ENCODE measurements at regions of chr9 and their contacts with region 1.

Region 1: GRCh38 chr9:110357505-110357904 is 19.8 kb upstream of the TXNDC8 start:
- DNase-seq: no peak
- ATAC-seq: no peak
- H3K4me3 ChIP-seq: no peak overlapping the region
- H3K4me3 Mint-ChIP-seq: no peak overlapping the region
- H3K27ac ChIP-seq: no peak overlapping the region
- H3K27ac Mint-ChIP-seq: no peak overlapping the region
- H3K4me1 ChIP-seq: no peaks in the 10 kb centered on the region
- H3K4me1 Mint-ChIP-seq: no peaks in the 10 kb centered on the region
- H3K27me3 ChIP-seq: no peaks in the 10 kb centered on the region
- H3K27me3 Mint-ChIP-seq: no peaks in the 10 kb centered on the region
- CTCF ChIP-seq: no peak

Region 2: DNA sequence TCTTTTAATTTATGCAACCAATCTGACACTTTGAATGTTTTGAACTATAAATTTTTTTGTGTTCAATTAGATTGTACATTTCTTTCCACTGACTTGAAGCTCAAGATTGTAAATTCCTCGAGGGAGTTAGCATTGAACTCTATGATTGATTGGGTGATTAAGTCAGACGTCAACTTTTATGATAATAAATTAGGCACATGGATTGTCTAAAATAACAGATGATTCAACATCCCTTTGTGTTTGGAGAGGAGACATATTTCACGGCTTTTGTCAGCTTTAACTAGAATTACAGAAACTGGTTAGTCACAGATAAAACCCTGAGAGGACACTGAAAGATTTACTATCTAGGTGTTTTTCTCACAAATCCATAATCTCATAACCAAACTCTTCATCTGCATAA is 12.8 kb after region 1 on chr9:
- CTCF ChIA-PET with region 1: no interaction called
- POLR2A ChIA-PET with region 1: no interaction called
- intact Hi-C with region 1: loop called in 1 of 2 experiments (anchors 1 kb)
- DNase-seq: no peak
- ATAC-seq: no peak
- H3K4me3 ChIP-seq: no peak overlapping the region
- H3K4me3 Mint-ChIP-seq: no peak overlapping the region
- H3K27ac ChIP-seq: no peak overlapping the region
- H3K27ac Mint-ChIP-seq: no peak overlapping the region
- H3K4me1 ChIP-seq: no peaks in the 10 kb centered on the region
- H3K4me1 Mint-ChIP-seq: no peaks in the 10 kb centered on the region
- H3K27me3 ChIP-seq: no peaks in the 10 kb centered on the region
- H3K27me3 Mint-ChIP-seq: peaks cover 2% of the 10 kb centered on the region
- CTCF ChIP-seq: no peak

Region 3: GRCh38 chr9:111108946-111109345 is 751.4 kb after region 1 on chr9:
- CTCF ChIA-PET with region 1: no interaction called
- POLR2A ChIA-PET with region 1: no interaction called
- intact Hi-C with region 1: no loop called
- DNase-seq: peak in 1 of 9 experiments; percentile 5
- ATAC-seq: no peak
- H3K4me3 ChIP-seq: no peak overlapping the region
- H3K4me3 Mint-ChIP-seq: no peak overlapping the region
- H3K27ac ChIP-seq: no peak overlapping the region
- H3K27ac Mint-ChIP-seq: no peak overlapping the region
- H3K4me1 ChIP-seq: no peaks in the 10 kb centered on the region
- H3K4me1 Mint-ChIP-seq: no peaks in the 10 kb centered on the region
- H3K27me3 ChIP-seq: no peaks in the 10 kb centered on the region
- H3K27me3 Mint-ChIP-seq: no peaks in the 10 kb centered on the region
- CTCF ChIP-seq: no peak

Measured in CD8-positive, alpha-beta T cell (primary cell).